ENCODE measurements at regions of chr17 and their contacts with region 1.

Region 1: GRCh38 chr17:33292184-33292980 is 713 bp downstream of the ASIC2 start:
- DNase-seq: peak; percentile 45 to 70 (median 58)
- ATAC-seq: peak; percentile 65
- H3K4me3 ChIP-seq: peak overlapping the region; percentile 3
- H3K4me1 ChIP-seq: peaks cover 9% of the 10 kb centered on the region
- CTCF ChIP-seq: peak; percentile 22

Region 2: GRCh38 chr17:32648450-32648849 is 643.9 kb before region 1 on chr17:
- intact Hi-C with region 1: no loop called
- DNase-seq: no peak
- ATAC-seq: no peak
- H3K4me3 ChIP-seq: no peak overlapping the region
- H3K4me1 ChIP-seq: no peaks in the 10 kb centered on the region
- CTCF ChIP-seq: no peak

Region 3: GRCh38 chr17:33260638-33261037 is 31.7 kb before region 1 on chr17:
- intact Hi-C with region 1: no loop called
- DNase-seq: peak; percentile 59 to 68 (median 62)
- ATAC-seq: peak; percentile 90
- H3K4me3 ChIP-seq: no peak overlapping the region
- H3K4me1 ChIP-seq: peaks cover 3% of the 10 kb centered on the region
- CTCF ChIP-seq: no peak

Region 4: DNA sequence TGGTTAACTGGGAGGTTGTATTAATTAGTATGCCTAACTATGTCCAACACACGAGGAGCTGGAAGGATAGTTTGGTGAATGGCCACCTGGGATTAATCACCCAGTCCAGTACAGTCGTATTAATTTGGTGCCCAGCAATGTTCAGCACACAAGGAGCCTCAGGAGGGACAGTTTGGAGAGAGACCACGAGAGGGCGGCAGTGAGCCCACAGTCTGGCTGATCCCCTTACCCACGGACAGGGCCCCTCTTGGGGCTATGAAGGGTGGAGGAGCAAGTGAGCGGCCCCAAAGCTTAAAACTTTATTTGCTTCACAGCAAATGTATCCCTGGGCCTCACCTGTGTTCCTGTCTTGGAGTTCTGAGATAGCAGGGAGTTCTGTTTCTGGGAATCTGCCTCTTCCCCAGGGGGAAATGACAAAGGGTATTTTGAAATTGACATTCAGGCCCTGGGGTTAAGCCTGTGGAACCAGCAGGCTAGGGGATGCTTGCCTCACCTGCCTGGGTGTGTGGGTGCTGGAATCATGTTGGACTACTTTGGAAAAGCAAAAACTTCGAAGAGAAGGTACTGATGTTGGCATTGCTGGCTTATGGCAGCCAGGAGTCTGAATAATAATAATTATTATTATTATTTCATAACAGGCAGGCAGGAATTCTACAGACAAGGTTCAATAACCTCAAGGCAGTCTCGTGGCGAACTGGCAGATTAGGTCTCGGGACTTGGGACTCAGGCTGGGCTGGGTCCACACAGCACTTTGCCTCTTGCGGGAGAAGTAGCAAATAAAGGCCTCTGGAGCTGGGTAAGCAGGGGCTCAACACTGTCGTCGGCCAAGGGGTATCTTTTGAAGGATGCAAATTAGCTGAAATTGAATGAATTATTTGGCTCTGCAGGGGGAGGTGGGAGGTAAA is 228.3 kb after region 1 on chr17:
- intact Hi-C with region 1: loop called in 1 of 2 experiments (anchors 10 kb)
- DNase-seq: peak in 2 of 3 donors; percentile 62 to 66
- ATAC-seq: peak; percentile 55
- H3K4me3 ChIP-seq: no peak overlapping the region
- H3K4me1 ChIP-seq: no peaks in the 10 kb centered on the region
- CTCF ChIP-seq: peak; percentile 37

Region 5: GRCh38 chr17:33686171-33686570 is 393.8 kb after region 1 on chr17:
- intact Hi-C with region 1: no loop called
- DNase-seq: peak in 1 of 3 donors; percentile 27
- ATAC-seq: no peak
- H3K4me3 ChIP-seq: no peak overlapping the region
- H3K4me1 ChIP-seq: no peaks in the 10 kb centered on the region
- CTCF ChIP-seq: no peak